ENCODE measurements at regions of chr2 and their contacts with region 1.

Region 1: GRCh38 chr2:95115418-95115817 is 6.2 kb downstream of the MRPS5 start:
- DNase-seq: peak; percentile 51 to 83 (median 72)
- ATAC-seq: peak; percentile 86 to 87
- H3K4me3 ChIP-seq: no peak overlapping the region
- H3K27ac ChIP-seq: no peak overlapping the region
- H3K4me1 ChIP-seq: peaks cover 3% of the 10 kb centered on the region
- H3K27me3 ChIP-seq: no peaks in the 10 kb centered on the region

Region 2: GRCh38 chr2:95022309-95023221 is 92.9 kb before region 1 on chr2:
- intact Hi-C with region 1: loop called in 2 of 4 experiments (anchors 5 kb)
- DNase-seq: peak; percentile 55 to 86 (median 85)
- ATAC-seq: peak; percentile 69 to 71
- H3K4me3 ChIP-seq: no peak overlapping the region
- H3K27ac ChIP-seq: no peak overlapping the region
- H3K4me1 ChIP-seq: no peaks in the 10 kb centered on the region
- H3K27me3 ChIP-seq: no peaks in the 10 kb centered on the region

Region 3: DNA sequence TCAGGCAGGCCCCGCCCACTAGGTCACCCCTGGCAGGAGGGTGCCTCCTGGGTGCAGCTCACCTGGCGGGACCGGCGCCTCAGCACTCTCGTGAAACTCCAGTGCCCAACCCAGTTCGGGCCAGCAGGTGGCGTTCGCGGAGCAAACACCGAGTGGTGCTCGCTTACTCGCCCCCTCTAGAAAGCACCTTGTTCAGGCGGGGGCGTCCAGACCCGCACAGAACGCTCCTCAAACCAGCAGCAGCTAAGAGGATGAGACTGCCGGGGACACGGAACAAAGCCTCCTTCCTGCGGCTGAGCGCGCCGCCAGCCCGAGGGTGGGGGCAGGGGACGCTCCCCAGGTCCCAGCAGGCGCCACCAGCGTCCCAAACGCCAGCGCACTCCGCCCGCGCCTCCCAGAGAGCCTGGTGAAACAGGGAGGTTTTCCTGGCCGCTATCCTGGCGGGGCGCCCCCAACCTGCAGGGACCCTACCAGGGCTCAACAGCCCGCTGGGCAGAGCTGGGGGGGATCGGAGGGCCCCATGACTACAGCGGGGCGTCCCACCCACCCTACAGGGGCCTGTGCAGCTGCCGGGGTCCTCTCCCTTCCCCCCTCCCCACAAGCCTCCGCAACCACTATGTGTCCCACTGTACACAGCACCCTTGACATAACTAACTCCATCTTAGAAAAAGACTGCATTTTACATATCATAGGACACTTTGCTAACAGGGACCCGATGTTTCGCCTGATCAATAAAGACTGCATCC is 38.5 kb before region 1 on chr2:
- intact Hi-C with region 1: loop called in 1 of 4 experiments (anchors 5 kb)
- DNase-seq: peak; percentile 68 to 89 (median 86)
- ATAC-seq: peak; percentile 72 to 81
- H3K4me3 ChIP-seq: peak overlapping the region; percentile 61
- H3K27ac ChIP-seq: no peak overlapping the region
- H3K4me1 ChIP-seq: no peaks in the 10 kb centered on the region
- H3K27me3 ChIP-seq: no peaks in the 10 kb centered on the region

Measured in right cardiac atrium (tissue), 5 donors.